ENCODE measurements at regions of chr17 and their contacts with region 1.

Region 1: DNA sequence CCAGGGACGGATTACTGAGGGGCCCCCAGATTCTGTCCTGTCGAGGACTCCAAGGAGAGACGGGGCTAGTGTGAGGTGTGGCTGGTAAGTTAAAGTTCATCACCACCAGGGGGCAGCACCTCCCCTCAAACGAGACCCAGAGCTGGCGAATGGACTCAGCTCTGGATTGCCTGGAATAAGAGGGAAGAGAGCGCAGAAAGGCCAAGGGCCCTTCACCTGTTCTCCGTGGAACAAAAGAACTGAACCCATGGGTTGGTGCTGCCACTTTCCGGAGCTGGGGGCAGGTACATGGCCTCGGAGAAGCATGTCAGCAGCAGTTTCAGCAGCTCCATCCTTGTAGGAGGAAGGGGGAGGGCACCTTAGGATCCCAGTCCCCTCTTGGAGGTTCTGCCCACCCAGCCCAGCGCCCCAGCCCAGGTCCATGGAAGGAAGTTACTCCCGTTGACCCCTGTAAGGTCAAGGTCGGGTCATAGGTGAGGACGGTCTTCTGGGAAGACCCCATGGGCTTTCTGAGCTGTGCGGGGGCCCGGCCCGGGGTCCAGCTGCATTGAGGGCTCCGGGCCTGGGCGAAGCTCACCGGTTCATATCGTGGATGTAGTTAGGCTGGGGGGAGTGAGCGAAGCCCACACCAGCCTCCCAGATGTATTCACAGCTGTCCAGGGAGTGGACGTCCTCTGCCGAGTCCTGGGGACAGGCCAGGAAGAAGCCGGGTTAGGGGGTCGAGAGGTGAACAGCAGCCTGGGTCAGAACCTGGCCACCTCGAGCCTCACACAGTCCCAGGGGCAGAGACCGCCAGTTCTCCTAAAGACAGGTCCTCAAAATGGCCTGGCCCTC is 10.7 kb downstream of the HID1 start:
- DNase-seq: peak; percentile 85
- ATAC-seq: peak; percentile 70
- H3K4me3 ChIP-seq: no peak overlapping the region
- H3K27ac ChIP-seq: no peak overlapping the region
- H3K4me1 ChIP-seq: peaks cover 6% of the 10 kb centered on the region; the same call in 1 of the 2 replicates
- H3K27me3 ChIP-seq: no peaks in the 10 kb centered on the region; a peak in 2 of 5 replicates
- CTCF ChIP-seq: peak; percentile 93
- EP300 ChIP-seq: no peak
- POLR2A ChIP-seq: no peak
- RAD21 ChIP-seq: peak; percentile 95

Region 2: GRCh38 chr17:74790161-74791054 is 171.5 kb before region 1 on chr17:
- CTCF ChIA-PET with region 1: interaction called, 12 read pairs
- POLR2A ChIA-PET with region 1: no interaction called
- in situ Hi-C with region 1: no loop called
- intact Hi-C with region 1: loop called (anchors 5 kb)
- DNase-seq: no peak
- ATAC-seq: no peak
- H3K4me3 ChIP-seq: no peak overlapping the region
- H3K27ac ChIP-seq: no peak overlapping the region
- H3K4me1 ChIP-seq: no peaks in the 10 kb centered on the region
- H3K27me3 ChIP-seq: no peaks in the 10 kb centered on the region
- CTCF ChIP-seq: no peak
- EP300 ChIP-seq: no peak
- POLR2A ChIP-seq: no peak
- RAD21 ChIP-seq: no peak

Region 3: DNA sequence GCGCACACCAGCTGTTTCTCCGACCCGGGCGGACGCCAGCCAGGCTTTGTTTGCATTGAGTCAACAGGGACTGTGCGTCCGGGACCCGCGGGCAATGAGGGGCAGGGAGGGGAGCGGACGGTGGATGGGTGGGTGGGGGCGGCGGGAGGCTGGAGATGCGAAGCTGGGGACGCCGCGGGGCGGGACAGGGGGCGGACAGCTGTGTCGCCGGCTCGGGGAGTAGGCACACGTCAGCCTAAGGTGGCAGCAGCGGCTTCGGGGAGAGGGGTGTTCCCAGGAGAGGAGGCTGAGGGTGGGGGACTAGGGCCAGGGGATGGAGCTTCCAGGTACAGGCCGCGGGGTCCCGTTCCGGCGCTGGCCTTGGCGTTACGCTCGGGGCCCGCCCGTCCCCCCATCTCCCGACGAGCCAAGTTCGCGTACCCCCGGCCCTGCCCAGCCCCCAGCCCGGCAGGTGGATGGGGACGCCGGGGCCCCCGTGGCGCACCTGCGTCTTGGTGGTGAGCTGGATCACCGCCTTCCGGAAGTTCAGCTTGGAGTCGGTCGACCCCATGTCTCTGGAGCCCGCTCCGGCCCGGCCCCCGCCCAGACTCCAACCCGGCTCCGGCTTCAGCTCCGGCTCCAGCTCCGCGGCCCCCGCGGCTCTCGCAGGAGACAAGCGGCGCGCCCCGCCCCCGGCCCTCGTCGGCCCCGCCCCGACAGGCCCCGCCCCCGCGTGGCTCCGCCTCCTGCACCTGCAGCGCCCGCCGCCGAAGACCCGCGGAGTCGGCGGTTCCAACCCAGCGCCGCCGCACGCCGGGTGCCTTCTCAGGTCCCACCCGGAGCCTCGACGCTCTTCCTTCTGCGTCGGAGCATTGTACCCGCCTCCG is 10.5 kb after region 1 on chr17 and contains the start of gene HID1:
- CTCF ChIA-PET with region 1: interaction called, 3 read pairs
- POLR2A ChIA-PET with region 1: interaction called, 18 read pairs
- in situ Hi-C with region 1: no loop called
- intact Hi-C with region 1: no loop called
- DNase-seq: peak; percentile 73
- ATAC-seq: peak; percentile 90
- H3K4me3 ChIP-seq: peak within 1 kb of the TSS; percentile 67 to 83 (median 70)
- H3K27ac ChIP-seq: no peak within 1 kb of the TSS
- H3K4me1 ChIP-seq: peaks cover 54% of the 10 kb centered on the region
- H3K27me3 ChIP-seq: peaks cover 5 to 50% of the 10 kb centered on the region in 2 experiments; a peak in 4 of 5 replicates
- CTCF ChIP-seq: 0 out of 2 replicates have a peak, but pooled peaks have one; percentile 17
- EP300 ChIP-seq: no peak
- POLR2A ChIP-seq: no peak
- RAD21 ChIP-seq: peak; percentile 15; the same call in 1 of the 2 replicates
- total RNA-seq, gene HID1: 1.7 and 2.1 TPM in 2 replicates

Region 4: GRCh38 chr17:75006653-75007052 is 44.8 kb after region 1 on chr17:
- CTCF ChIA-PET with region 1: interaction called, 44 read pairs
- POLR2A ChIA-PET with region 1: interaction called, 94 read pairs
- in situ Hi-C with region 1: loop called (anchors 5 kb)
- intact Hi-C with region 1: loop called (anchors 1 kb)
- DNase-seq: peak; percentile 69
- ATAC-seq: peak; percentile 70
- H3K4me3 ChIP-seq: no peak overlapping the region
- H3K27ac ChIP-seq: no peak overlapping the region
- H3K4me1 ChIP-seq: peaks cover 12% of the 10 kb centered on the region
- H3K27me3 ChIP-seq: no peaks in the 10 kb centered on the region; a peak in 1 of 5 replicates
- CTCF ChIP-seq: peak; percentile 83
- EP300 ChIP-seq: no peak
- POLR2A ChIP-seq: no peak
- RAD21 ChIP-seq: peak; percentile 84

Region 5: GRCh38 chr17:75034236-75034908 is 72.5 kb after region 1 on chr17:
- CTCF ChIA-PET with region 1: interaction called, 3 read pairs
- POLR2A ChIA-PET with region 1: interaction called, 13 read pairs
- in situ Hi-C with region 1: no loop called
- intact Hi-C with region 1: loop called (anchors 1 kb)
- DNase-seq: peak; percentile 94
- ATAC-seq: peak; percentile 58
- H3K4me3 ChIP-seq: peak overlapping the region; percentile 76 to 93 (median 91)
- H3K27ac ChIP-seq: peak overlapping the region; percentile 94
- H3K4me1 ChIP-seq: peaks cover 37% of the 10 kb centered on the region
- H3K27me3 ChIP-seq: peaks cover 0 to 6% of the 10 kb centered on the region in 2 experiments; a peak in 3 of 5 replicates
- CTCF ChIP-seq: peak; percentile 48
- EP300 ChIP-seq: no peak
- POLR2A ChIP-seq: no peak
- RAD21 ChIP-seq: no peak

Measured in HepG2 (cell line).